Vagina (tissue), 2 donors: ENCODE measurements at regions of chr12 and their contacts with region 1.

Region 1: GRCh38 chr12:49707128-49707811 is at the start of gene FMNL3:
- DNase-seq: peak in 1 of 2 donors; percentile 94
- H3K4me3 ChIP-seq: peak within 1 kb of the TSS; percentile 80 to 81
- H3K27ac ChIP-seq: peak within 1 kb of the TSS; percentile 92
- H3K4me1 ChIP-seq: peaks cover 21% of the 10 kb centered on the region
- H3K27me3 ChIP-seq: no peaks in the 10 kb centered on the region
- CTCF ChIP-seq: peak; percentile 98 to 100 (median 99)
- POLR2A ChIP-seq: no peak
- total RNA-seq, gene FMNL3: 11.0 TPM

Region 2: DNA sequence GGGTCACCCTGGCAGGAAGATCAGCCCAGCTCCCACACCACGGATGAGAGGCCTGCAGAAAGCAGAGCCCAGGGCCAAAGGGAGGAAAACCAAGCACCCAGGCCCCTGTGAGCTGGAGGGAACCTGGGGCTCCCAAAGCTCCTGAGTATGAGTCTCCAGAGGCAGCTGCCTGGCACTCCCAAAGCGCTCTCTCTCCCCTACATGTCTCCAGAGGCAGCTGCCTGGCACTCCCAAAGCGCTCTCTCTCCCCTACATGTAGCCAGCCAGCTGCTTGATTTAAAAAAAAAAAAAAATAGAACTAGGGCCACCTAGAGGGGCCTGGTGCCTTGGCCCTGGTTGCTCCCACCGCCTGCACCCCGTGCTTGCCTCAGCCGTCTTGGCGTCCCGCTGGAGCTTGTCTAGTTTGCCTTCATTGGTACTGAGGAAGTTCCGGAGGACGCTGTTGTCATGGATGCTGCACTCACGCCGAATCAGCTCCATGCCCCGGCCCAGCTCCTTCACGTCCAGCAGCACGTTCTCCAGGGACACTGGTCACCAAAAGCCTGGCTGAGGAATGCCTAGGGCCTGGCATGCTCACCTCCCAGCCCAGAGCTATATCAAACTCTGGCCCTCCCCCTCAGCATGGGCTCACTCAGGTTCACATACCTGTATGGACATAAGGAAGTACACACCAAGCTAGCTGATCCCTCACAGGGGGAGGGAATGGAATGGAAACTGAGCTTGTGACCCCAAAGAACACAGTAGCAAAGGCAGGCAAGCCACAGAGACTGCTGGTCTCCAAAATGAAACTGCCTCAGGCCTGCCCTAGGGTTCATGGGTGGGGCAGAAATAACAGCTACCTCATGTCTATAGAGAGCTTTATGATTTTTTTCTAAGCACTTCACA is 59.2 kb before region 1 on chr12:
- intact Hi-C with region 1: loop called (anchors 2 kb)
- DNase-seq: no peak
- H3K4me3 ChIP-seq: no peak overlapping the region
- H3K27ac ChIP-seq: no peak overlapping the region
- H3K4me1 ChIP-seq: no peaks in the 10 kb centered on the region
- H3K27me3 ChIP-seq: no peaks in the 10 kb centered on the region
- CTCF ChIP-seq: no peak
- POLR2A ChIP-seq: no peak